ENCODE measurements at regions of chr17 and their contacts with region 1.

Region 1: GRCh38 chr17:3535253-3535995 is 22.2 kb downstream of the TRPV3 start:
- DNase-seq: peak in 9 of 10 donors; percentile 60 to 85 (median 78)
- H3K4me3 ChIP-seq: peak overlapping the region; percentile 24 to 76 (median 68)
- H3K27ac ChIP-seq: peak overlapping the region; percentile 32 to 100 (median 96)
- H3K27me3 ChIP-seq: no peaks in the 10 kb centered on the region
- CTCF ChIP-seq: peak; percentile 42 to 90 (median 78)

Region 2: DNA sequence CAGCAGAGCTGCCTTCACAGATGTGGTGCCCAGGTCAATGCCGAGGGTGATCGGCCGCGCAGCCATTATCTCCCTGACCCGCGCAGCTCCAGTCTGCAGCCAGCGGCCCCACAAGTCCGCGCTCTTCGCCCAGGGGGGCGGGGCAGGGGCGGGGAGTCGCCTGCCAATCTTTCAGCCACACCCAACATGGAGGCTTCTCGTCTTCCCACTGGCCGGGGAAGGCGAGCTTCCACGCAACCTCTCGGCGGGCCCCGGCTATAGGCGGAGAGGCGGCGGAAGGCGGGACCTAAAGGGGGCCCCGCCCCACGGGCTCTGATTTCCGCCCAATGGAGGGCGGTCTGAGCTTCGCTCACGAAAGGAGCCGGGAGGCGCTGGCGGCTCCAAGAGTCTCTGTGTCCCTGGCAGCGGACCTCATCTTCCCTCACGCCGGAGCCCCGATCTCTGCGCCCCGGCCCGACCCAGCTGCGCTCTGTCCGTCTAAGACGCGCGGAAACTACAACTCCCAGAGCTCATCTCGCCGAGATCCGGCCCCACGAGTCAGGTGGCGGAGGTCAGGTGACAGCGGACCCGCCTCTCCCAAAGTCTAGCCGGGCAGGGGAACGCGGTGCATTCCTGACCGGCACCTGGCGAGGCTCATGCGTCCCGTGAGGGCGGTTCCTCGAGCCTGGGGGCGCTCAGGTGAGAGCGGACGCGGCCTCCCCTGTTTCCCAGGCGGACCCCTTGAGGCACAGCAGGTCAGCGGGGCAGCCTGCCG is 100.9 kb after region 1 on chr17 and contains the starts of genes CTNS and SHPK:
- intact Hi-C with region 1: loop called (anchors 5 kb)
- DNase-seq: peak; percentile 95 to 99 (median 98)
- H3K4me3 ChIP-seq: peak within 1 kb of the TSS; percentile 66 to 100 (median 97)
- H3K27ac ChIP-seq: peak within 1 kb of the TSS; percentile 86 to 100 (median 98)
- H3K27me3 ChIP-seq: no peaks in the 10 kb centered on the region
- CTCF ChIP-seq: peak in 17 of 56 donors; percentile 3 to 45 (median 27)
- total RNA-seq, gene CTNS: 5.0 to 16.5 (median 9.6) TPM
- total RNA-seq, gene SHPK: 7.4 to 28.1 (median 15.1) TPM